GM12878 (cell line): ENCODE measurements at regions of chr2 and their contacts with region 1.

Region 1: DNA sequence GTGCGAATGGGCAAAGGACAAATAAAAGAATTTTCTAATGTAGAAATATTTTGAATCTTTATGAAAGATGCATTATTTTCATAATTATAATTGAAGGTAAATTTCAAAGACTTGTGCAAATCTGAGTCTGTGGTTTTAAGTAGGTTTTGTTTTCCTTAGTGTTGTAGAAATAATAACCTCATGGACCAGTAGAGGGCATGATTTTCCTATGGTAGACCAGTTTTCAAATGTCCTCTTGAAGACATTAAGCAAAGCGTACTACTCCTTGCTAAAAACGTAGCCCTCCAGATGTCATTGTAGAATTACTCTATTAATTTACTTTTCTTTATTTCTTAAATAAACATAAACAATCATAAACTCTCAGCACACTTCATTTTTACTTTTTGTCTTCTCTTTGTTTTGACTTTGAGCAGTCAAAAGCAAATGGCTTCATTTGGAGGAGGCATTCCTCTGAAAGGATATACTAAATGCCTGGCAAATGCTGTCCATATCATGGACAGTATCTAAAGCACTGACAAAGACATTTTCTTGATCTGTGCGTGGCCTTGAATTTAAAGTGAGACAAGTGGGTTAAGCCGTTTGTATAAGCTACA is 85.8 kb upstream of the FAM237A start:
- DNase-seq: no peak
- ATAC-seq: peak; percentile 79
- H3K4me3 ChIP-seq: no peak overlapping the region
- H3K27ac ChIP-seq: no peak overlapping the region
- H3K4me1 ChIP-seq: no peaks in the 10 kb centered on the region
- H3K27me3 ChIP-seq: no peaks in the 10 kb centered on the region
- CTCF ChIP-seq: peak; percentile 46 to 63 (median 52); a peak in 5 of 6 replicates
- EP300 ChIP-seq: no peak
- POLR2A ChIP-seq: no peak
- RAD21 ChIP-seq: peak; percentile 61

Region 2: DNA sequence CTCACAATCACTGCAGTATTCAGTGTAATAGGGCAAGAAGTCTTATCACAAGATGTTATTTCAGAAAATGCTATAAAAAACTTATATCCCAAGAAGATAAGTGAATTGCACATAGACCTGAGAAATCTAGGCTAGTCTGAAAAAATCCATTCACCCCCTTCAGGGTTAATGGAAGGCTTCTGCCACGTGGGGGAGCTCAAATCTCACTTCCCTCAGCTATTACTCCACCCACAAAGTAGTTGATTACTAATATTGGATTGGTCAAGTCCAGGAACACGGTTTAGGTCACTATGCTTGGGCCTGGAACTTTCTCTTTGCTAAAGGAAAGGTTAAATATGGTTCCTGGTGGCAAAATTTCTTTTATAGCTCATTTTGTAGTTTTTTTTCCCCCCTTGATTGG is 164.3 kb before region 1 on chr2:
- CTCF ChIA-PET with region 1: interaction called, 53 read pairs
- POLR2A ChIA-PET with region 1: no interaction called
- RAD21 ChIA-PET with region 1: interaction called, 15 read pairs
- SMC1A ChIA-PET with region 1: interaction called, 37 read pairs
- in situ Hi-C with region 1: no loop called
- intact Hi-C with region 1: loop called (anchors 1 kb)
- DNase-seq: no peak
- ATAC-seq: peak; percentile 99
- H3K4me3 ChIP-seq: no peak overlapping the region
- H3K27ac ChIP-seq: no peak overlapping the region
- H3K4me1 ChIP-seq: no peaks in the 10 kb centered on the region
- H3K27me3 ChIP-seq: no peaks in the 10 kb centered on the region
- CTCF ChIP-seq: peak; percentile 57 to 75 (median 71)
- EP300 ChIP-seq: no peak
- POLR2A ChIP-seq: no peak
- RAD21 ChIP-seq: peak; percentile 96

Region 3: DNA sequence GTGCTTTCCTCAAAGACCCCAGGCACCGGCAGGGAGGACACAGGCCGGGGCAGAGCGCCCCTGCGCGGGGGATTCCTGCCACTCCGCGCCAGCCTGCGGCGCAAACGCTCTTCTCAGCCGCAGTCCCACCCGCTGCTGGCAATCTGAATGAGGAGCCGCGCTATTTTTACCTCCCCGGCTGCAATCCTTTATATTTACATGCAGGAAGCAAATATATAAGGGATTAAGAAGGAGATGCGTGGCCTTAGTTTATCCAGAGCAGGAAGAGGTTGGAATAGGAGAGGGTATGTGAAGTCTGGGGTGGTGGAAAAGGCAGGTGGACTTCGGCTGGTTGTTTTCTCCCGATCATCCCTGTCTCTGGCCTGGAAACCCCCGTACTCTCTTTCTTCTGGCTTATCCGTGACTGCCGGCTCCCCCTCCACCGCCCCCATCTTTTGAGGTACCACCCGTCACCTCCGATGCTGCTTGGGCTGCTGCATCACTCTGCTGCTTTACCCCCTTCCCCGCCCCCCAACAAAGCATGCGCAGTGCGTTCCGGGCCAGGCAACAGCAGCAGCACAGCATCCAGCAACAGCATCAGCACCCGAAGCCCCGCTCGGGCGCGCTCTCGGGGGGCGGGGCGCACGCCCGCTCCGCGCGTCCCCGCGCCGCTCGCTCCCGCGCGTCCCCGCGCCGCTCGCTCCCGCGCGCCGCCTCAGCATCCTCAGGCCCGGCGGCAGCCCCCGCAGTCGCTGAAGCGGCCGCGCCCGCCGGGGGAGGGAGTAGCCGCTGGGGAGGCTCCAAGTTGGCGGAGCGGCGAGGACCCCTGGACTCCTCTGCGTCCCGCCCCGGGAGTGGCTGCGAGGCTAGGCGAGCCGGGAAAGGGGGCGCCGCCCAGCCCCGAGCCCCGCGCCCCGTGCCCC is 113.4 kb before region 1 on chr2 and contains the start of gene ADAM23:
- CTCF ChIA-PET with region 1: interaction called, 5 read pairs
- POLR2A ChIA-PET with region 1: no interaction called
- RAD21 ChIA-PET with region 1: interaction called, 6 read pairs
- SMC1A ChIA-PET with region 1: interaction called, 5 read pairs
- in situ Hi-C with region 1: no loop called
- intact Hi-C with region 1: loop called (anchors 5 kb)
- DNase-seq: no peak
- ATAC-seq: peak; percentile 51
- H3K4me3 ChIP-seq: peak within 1 kb of the TSS; percentile 63
- H3K27ac ChIP-seq: no peak within 1 kb of the TSS
- H3K4me1 ChIP-seq: peaks cover 7% of the 10 kb centered on the region
- H3K27me3 ChIP-seq: peaks cover 3 to 24% of the 10 kb centered on the region in 2 experiments
- CTCF ChIP-seq: peak in 1 of 3 experiments; percentile 15; a peak in 2 of 6 replicates
- EP300 ChIP-seq: no peak
- POLR2A ChIP-seq: peak; percentile 55; the same call in 1 of the 2 replicates
- RAD21 ChIP-seq: peak; percentile 38; the same call in 1 of the 2 replicates
- polyA plus RNA-seq, gene ADAM23: 7.9 to 11.9 TPM

Region 4: DNA sequence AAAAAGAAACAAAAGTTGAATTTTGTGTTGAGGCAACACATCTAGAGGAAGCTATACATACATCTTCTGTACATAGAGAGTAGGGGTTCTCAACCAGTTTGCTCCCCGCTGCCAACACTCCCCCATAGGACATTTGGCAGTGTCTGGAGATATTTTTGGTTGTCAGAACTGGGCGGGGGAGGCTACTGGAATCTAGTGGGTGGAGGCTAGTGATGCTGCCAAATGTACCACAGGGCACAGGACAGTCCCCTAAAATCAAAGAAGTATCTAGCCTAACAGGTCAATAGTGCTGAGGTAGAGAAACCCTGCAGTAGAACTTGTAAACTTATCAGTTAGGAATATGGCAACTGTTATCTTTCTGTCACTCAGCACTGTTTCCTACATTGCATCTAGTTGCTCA is 91.9 kb before region 1 on chr2:
- CTCF ChIA-PET with region 1: interaction called, 11 read pairs
- POLR2A ChIA-PET with region 1: no interaction called
- RAD21 ChIA-PET with region 1: no interaction called
- SMC1A ChIA-PET with region 1: interaction called, 4 read pairs
- in situ Hi-C with region 1: no loop called
- intact Hi-C with region 1: no loop called
- DNase-seq: no peak
- ATAC-seq: peak; percentile 51
- H3K4me3 ChIP-seq: no peak overlapping the region
- H3K27ac ChIP-seq: no peak overlapping the region
- H3K4me1 ChIP-seq: no peaks in the 10 kb centered on the region; the same call in 1 of the 2 replicates
- H3K27me3 ChIP-seq: no peaks in the 10 kb centered on the region; a peak in 1 of 4 replicates
- CTCF ChIP-seq: no peak
- EP300 ChIP-seq: no peak
- POLR2A ChIP-seq: no peak
- RAD21 ChIP-seq: no peak

Region 5: GRCh38 chr2:206572725-206573124 is 16.3 kb after region 1 on chr2:
- CTCF ChIA-PET with region 1: interaction called, 16 read pairs
- POLR2A ChIA-PET with region 1: interaction called, 4 read pairs
- RAD21 ChIA-PET with region 1: interaction called, 11 read pairs
- SMC1A ChIA-PET with region 1: interaction called, 20 read pairs
- in situ Hi-C with region 1: no loop called
- intact Hi-C with region 1: no loop called
- DNase-seq: no peak
- ATAC-seq: peak; percentile 77
- H3K4me3 ChIP-seq: no peak overlapping the region
- H3K27ac ChIP-seq: no peak overlapping the region
- H3K4me1 ChIP-seq: no peaks in the 10 kb centered on the region
- H3K27me3 ChIP-seq: no peaks in the 10 kb centered on the region
- CTCF ChIP-seq: no peak
- EP300 ChIP-seq: 0 out of 4 replicates have a peak, but pooled peaks of 1 of the 2 experiments have one; percentile 13
- POLR2A ChIP-seq: no peak
- RAD21 ChIP-seq: no peak

Region 6: GRCh38 chr2:206693399-206694137 is 137.1 kb after region 1 on chr2:
- CTCF ChIA-PET with region 1: interaction called, 5 read pairs
- POLR2A ChIA-PET with region 1: no interaction called
- RAD21 ChIA-PET with region 1: no interaction called
- SMC1A ChIA-PET with region 1: interaction called, 5 read pairs
- in situ Hi-C with region 1: no loop called
- intact Hi-C with region 1: loop called (anchors 10 kb)
- DNase-seq: peak; percentile 24
- ATAC-seq: peak; percentile 84
- H3K4me3 ChIP-seq: no peak overlapping the region
- H3K27ac ChIP-seq: no peak overlapping the region
- H3K4me1 ChIP-seq: no peaks in the 10 kb centered on the region
- H3K27me3 ChIP-seq: no peaks in the 10 kb centered on the region
- CTCF ChIP-seq: peak; percentile 41 to 77 (median 61); a peak in 5 of 6 replicates
- EP300 ChIP-seq: no peak
- POLR2A ChIP-seq: no peak
- RAD21 ChIP-seq: peak; percentile 94

Region 7: GRCh38 chr2:206783718-206784117 is 227.3 kb after region 1 on chr2:
- CTCF ChIA-PET with region 1: interaction called, 28 read pairs
- POLR2A ChIA-PET with region 1: no interaction called
- RAD21 ChIA-PET with region 1: interaction called, 4 read pairs
- SMC1A ChIA-PET with region 1: interaction called, 7 read pairs
- in situ Hi-C with region 1: no loop called
- intact Hi-C with region 1: loop called (anchors 5 kb)
- DNase-seq: no peak
- ATAC-seq: peak; percentile 74
- H3K4me3 ChIP-seq: no peak overlapping the region
- H3K27ac ChIP-seq: no peak overlapping the region
- H3K4me1 ChIP-seq: no peaks in the 10 kb centered on the region
- H3K27me3 ChIP-seq: no peaks in the 10 kb centered on the region
- CTCF ChIP-seq: peak; percentile 12 to 47 (median 37); a peak in 3 of 6 replicates
- EP300 ChIP-seq: no peak
- POLR2A ChIP-seq: no peak
- RAD21 ChIP-seq: no peak